ENCODE measurements at regions of chr7 and their contacts with region 1.

Region 1: GRCh38 chr7:156892821-156893706 is at the start of gene LMBR1:
- DNase-seq: peak; percentile 94 to 97 (median 95)
- ATAC-seq: peak; percentile 96 to 97 (median 96)
- H3K4me3 ChIP-seq: peak within 1 kb of the TSS; percentile 60 to 99 (median 86)
- H3K27ac ChIP-seq: peak within 1 kb of the TSS; percentile 83 to 96 (median 94)
- H3K4me1 ChIP-seq: peaks cover 0 to 39% (median 27%) of the 10 kb centered on the region in 12 donors
- H3K27me3 ChIP-seq: no peaks in the 10 kb centered on the region
- CTCF ChIP-seq: peak; percentile 19 to 74 (median 52)
- POLR2A ChIP-seq: peak in 1 of 2 donors; percentile 68
- total RNA-seq, gene LMBR1: 25.6 to 51.9 (median 38.7) TPM

Region 2: GRCh38 chr7:156475666-156476065 is 417.4 kb before region 1 on chr7:
- intact Hi-C with region 1: no loop called
- DNase-seq: no peak
- ATAC-seq: peak in 2 of 4 donors; percentile 39 to 41
- H3K4me3 ChIP-seq: no peak overlapping the region
- H3K27ac ChIP-seq: no peak overlapping the region
- H3K4me1 ChIP-seq: no peaks in the 10 kb centered on the region
- H3K27me3 ChIP-seq: peaks cover 0 to 37% (median 0%) of the 10 kb centered on the region in 9 donors
- CTCF ChIP-seq: no peak
- POLR2A ChIP-seq: no peak

Region 3: DNA sequence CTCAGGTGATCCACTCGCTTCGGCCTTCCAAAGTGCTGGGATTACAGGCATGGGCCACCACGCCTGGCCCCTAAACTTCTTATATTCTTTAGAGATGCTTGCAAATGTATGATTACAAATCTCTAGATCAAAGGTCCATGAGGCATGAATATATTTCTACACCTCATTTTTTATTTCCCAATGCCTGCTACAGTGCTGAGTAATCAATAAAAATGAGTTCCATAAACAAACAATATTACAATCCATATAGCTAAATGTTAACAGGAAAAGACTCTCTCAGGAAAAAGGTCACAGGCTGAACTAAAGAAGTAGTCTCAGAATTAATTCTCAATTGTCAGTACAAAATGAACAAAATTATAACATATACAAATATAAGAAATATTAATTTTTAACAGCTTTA is 90.8 kb before region 1 on chr7:
- intact Hi-C with region 1: no loop called
- DNase-seq: no peak
- ATAC-seq: no peak
- H3K4me3 ChIP-seq: no peak overlapping the region
- H3K27ac ChIP-seq: no peak overlapping the region
- H3K4me1 ChIP-seq: no peaks in the 10 kb centered on the region
- H3K27me3 ChIP-seq: no peaks in the 10 kb centered on the region
- CTCF ChIP-seq: no peak
- POLR2A ChIP-seq: no peak

Region 4: DNA sequence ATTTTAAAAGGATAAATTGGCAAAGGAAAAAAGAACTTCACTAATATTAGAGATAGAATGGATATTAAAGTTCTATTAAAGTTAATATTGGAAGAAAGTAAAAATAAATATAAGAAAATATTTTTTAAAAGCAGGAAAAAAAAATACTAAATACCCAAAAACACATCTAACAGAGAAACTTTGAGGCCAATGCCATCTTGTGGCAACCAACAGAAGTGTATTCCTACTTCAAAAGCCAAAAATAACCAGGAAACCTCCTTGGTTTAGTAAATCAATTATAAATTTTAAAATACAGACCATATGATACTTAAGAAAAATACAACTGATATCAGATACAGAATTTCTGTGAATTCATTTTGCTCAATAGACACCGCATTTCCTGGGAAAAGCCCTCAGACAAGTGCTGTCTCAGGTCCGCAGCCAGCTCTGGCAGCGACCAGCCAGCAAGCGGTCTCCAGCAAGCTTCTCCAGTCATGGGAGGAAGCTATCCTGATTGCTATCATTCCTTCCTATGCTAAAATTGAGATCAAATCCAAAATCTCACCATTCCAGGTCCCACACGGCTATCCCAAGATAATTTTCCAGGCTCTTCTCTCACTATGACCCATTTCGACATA is 65.4 kb before region 1 on chr7:
- intact Hi-C with region 1: loop called in 1 of 10 experiments (anchors 10 kb)
- DNase-seq: no peak
- ATAC-seq: no peak
- H3K4me3 ChIP-seq: no peak overlapping the region
- H3K27ac ChIP-seq: no peak overlapping the region
- H3K4me1 ChIP-seq: peaks cover 0 to 19% (median 0%) of the 10 kb centered on the region in 12 donors
- H3K27me3 ChIP-seq: no peaks in the 10 kb centered on the region
- CTCF ChIP-seq: peak; percentile 18 to 58 (median 44)
- POLR2A ChIP-seq: no peak

Region 5: DNA sequence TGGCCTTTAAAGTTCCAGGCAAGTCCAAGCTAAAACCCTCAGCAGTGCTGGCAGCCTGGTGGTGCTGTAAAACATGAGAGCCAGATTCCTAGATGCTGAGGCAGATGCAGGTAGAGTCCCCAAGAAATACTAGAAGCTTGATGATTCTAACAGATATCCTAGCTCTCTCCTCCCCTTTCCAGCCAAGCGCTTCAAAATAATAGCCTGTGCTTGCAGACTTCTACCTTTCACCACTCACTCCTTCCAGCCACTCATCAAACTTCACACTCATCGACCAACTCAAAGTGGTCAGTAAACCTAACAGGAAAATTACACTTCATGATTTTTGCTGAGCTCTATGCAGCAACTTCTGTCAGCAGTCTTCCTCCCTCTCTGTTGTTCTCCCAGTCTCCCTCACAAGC is 50.3 kb before region 1 on chr7:
- intact Hi-C with region 1: loop called in 1 of 10 experiments (anchors 5 kb)
- DNase-seq: no peak
- ATAC-seq: no peak
- H3K4me3 ChIP-seq: no peak overlapping the region
- H3K27ac ChIP-seq: no peak overlapping the region
- H3K4me1 ChIP-seq: peaks cover 0 to 28% (median 14%) of the 10 kb centered on the region in 12 donors
- H3K27me3 ChIP-seq: no peaks in the 10 kb centered on the region
- CTCF ChIP-seq: no peak
- POLR2A ChIP-seq: no peak

Region 6: DNA sequence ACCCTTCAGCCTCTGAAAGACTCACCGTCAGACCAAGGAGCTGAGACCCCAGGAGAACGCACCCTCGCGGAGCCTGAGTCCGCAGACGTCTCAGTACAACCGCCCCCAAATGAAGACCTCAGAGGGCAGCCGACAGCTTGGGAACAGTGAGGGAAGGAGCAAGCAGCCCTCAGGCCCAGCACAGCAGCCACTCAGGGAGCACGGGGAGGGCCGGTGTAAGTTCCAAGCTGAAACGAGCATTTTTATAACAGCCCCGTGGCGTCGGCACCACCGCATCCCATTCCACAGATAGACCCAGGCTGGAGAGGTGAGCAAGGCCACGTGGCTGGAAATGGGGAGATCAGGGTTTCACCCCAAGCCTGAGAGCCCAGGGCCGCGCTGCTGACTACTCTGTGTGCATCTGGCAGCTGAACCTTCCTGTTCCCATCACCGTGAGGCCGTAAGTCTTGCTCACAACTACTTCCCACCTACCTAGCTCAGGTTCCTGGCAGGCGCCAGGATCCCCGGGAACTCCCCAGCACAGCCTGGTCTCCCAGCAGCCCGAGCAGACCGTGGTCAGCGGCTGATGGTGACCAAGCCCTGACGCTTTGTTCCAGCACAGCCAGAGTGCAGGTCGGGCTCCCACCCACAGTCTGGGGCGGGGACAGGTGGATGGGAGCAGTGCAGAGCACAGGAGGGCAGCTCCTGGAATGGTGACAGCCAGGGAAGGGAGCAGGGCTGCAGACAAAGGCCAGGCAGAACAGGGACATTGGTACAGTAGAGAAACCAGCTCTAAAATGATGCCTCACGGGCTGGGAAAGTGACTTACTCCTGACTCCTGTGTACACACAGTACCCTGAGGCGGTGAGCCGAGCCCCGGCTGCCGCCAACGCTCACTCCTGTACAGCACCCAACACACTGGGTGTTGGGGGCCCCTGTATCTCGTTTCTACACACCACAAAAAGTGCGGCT is 50.3 kb after region 1 on chr7:
- intact Hi-C with region 1: loop called in 2 of 10 experiments (anchors 5 kb)
- DNase-seq: no peak
- ATAC-seq: peak in 1 of 4 donors; percentile 54
- H3K4me3 ChIP-seq: no peak overlapping the region
- H3K27ac ChIP-seq: no peak overlapping the region
- H3K4me1 ChIP-seq: peaks cover 0 to 10% (median 0%) of the 10 kb centered on the region in 12 donors
- H3K27me3 ChIP-seq: peaks cover 0 to 44% (median 16%) of the 10 kb centered on the region in 9 donors
- CTCF ChIP-seq: no peak
- POLR2A ChIP-seq: no peak

Region 7: DNA sequence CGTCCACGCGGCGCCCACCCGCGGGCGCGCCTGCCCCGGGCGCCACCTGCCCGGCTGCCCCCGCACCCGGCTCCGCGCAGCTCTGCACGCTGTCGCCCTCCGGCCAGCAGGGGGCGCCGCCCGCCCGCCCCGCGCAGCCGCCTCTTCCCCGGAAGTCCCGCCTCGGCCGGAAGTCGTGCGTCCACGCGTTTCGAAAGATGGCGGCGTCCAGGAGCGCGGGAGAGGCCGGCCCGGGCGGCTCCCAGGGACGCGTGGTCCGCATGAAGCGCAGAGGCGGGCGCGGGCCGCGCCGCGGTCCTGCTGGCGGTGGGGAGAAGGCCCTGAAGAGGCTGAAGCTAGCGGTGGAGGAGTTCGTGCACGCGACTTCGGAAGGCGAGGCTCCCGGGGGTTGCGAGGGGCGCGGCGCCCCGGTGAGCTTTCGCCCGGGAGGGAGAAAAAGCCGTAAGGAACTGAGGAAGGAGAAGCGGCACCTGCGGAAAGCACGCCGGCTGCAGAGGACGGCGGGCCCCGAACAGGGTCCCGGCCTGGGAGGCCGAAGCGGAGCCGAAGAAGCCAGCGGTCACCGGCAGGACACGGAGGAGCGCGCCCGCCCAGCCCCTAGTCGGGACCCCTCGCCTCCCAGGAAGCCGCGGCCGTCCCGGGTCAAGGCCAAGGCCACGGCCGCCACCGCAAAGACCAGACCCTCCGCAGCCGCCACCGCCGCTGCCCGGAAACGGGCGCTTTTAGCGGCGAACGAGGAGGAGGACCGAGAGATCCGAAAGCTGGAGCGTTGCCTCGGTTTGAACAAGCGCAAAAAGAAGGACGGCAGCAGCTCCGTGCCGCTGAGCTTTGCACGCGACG is 56.7 kb after region 1 on chr7 and contains the start of gene NOM1:
- intact Hi-C with region 1: loop called in 2 of 10 experiments (anchors 5 kb)
- DNase-seq: peak; percentile 89 to 97 (median 93)
- ATAC-seq: peak; percentile 76 to 99 (median 96)
- H3K4me3 ChIP-seq: peak within 1 kb of the TSS; percentile 81 to 100 (median 92)
- H3K27ac ChIP-seq: peak within 1 kb of the TSS in 11 of 12 donors; percentile 3 to 79 (median 64)
- H3K4me1 ChIP-seq: peaks cover 0 to 33% (median 20%) of the 10 kb centered on the region in 12 donors
- H3K27me3 ChIP-seq: peaks cover 0 to 23% (median 0%) of the 10 kb centered on the region in 9 donors
- CTCF ChIP-seq: peak; percentile 54 to 100 (median 81)
- POLR2A ChIP-seq: peak in 1 of 2 donors; percentile 55
- total RNA-seq, gene NOM1: 6.0 to 12.2 (median 9.1) TPM

Region 8: GRCh38 chr7:157250605-157251228 is 357.7 kb after region 1 on chr7:
- intact Hi-C with region 1: loop called in 1 of 10 experiments (anchors 10 kb)
- DNase-seq: peak in 1 of 5 donors; percentile 39
- ATAC-seq: peak in 3 of 4 donors; percentile 45 to 66 (median 62)
- H3K4me3 ChIP-seq: no peak overlapping the region
- H3K27ac ChIP-seq: no peak overlapping the region
- H3K4me1 ChIP-seq: no peaks in the 10 kb centered on the region
- H3K27me3 ChIP-seq: no peaks in the 10 kb centered on the region
- CTCF ChIP-seq: peak; percentile 52 to 86 (median 74)
- POLR2A ChIP-seq: no peak

Measured in heart left ventricle (tissue), 16 donors.